ENCODE measurements at regions of chr1 and their contacts with region 1.

Region 1: DNA sequence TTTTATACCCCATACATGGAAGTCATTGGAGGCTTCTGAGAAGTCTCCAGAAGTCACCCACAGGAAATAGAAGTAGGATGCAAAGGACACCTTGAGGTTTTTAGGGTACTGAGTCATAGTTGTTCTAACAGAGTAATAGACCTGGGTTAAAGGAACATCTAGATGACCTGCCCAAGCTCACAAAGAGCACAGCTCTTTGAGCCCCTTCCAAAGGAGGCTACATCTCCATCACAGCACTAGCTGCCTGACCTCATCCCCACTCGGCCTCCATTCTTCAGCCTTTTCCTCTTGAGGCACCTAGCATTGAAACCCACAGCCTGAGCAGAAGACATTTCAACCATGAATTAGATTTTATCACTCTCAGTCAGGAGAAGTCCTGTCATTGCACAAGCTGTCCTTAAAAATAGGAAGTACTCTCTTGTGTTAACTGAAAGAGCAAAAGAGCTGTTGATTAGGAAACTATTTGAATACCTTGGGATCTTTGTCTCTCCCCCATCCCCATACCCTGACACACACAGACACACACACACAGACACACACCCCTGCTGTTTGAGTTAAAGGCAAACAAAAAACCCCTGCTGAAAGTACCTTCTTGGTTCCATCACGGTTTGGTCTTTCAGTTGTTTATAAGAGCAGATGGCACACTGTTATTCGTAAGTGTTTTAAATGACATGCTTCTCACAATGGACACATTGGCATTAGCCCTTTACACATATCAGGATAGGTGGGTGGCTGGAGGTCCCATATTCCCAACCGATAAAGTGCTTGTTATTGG is 22.2 kb downstream of the MKNK1 start:
- DNase-seq: no peak
- H3K4me3 ChIP-seq: no peak overlapping the region
- H3K27ac ChIP-seq: no peak overlapping the region
- H3K4me1 ChIP-seq: no peaks in the 10 kb centered on the region
- H3K27me3 ChIP-seq: no peaks in the 10 kb centered on the region
- CTCF ChIP-seq: no peak

Region 2: DNA sequence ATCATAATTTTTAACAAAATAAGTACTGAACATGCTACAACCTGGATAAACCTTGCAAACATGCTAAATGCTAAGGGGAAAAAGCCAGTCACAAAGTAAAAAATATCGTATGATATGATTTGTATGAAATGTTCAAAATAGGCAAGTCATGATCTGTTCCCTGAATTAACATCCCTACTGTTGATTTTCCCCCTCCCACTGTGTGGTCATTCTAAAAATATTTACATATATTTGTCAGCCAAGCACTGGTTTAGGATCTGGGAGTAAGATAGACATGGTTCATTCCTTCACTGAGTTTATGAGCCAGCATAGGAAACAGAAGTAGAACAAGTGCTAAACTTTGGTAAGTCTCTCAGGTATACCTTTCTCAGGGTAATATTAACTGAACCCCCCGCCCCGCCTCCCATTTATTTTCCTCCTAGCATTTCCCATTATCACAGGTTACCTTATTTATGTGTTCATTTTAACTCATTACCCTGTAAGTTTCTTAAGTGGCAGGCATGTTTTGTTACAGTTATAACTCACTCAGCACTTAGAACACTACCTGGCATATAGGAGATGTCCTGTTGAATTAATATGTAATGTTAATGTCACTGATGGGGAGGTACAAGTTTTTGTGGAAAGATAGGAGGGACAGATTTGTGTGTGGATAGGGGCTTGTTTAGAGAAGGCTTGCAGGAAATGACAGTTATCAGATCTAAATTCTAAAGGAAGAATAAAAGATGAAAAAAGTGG is 266.0 kb before region 1 on chr1:
- CTCF ChIA-PET with region 1: no interaction called
- POLR2A ChIA-PET with region 1: no interaction called
- intact Hi-C with region 1: no loop called
- DNase-seq: no peak
- H3K4me3 ChIP-seq: no peak overlapping the region
- H3K27ac ChIP-seq: no peak overlapping the region
- H3K4me1 ChIP-seq: no peaks in the 10 kb centered on the region
- H3K27me3 ChIP-seq: no peaks in the 10 kb centered on the region
- CTCF ChIP-seq: no peak

Region 3: DNA sequence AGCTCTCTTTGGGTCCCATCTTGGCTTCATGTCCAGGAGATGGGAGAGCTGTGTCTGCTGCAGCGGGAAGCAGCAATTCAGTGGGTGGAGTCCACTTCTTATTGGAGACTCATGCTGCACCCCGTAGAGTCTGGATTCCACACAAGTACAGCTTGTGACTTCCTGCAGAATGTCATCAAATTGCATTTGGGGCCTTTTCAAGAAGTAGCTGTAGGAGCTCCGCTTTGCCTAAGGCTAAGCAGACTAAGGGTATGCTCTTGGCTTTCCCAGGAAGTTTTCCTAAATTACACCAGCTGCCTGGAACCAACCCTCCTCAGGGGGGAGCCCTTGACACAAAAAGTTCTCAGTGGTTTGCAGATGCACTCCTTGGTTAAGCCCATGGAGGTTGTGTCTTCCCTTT is 40.5 kb after region 1 on chr1:
- CTCF ChIA-PET with region 1: no interaction called
- POLR2A ChIA-PET with region 1: interaction called, 11 read pairs
- intact Hi-C with region 1: no loop called
- DNase-seq: peak; percentile 76
- H3K4me3 ChIP-seq: no peak overlapping the region
- H3K27ac ChIP-seq: no peak overlapping the region
- H3K4me1 ChIP-seq: peaks cover 4% of the 10 kb centered on the region
- H3K27me3 ChIP-seq: no peaks in the 10 kb centered on the region
- CTCF ChIP-seq: peak; percentile 68

Region 4: DNA sequence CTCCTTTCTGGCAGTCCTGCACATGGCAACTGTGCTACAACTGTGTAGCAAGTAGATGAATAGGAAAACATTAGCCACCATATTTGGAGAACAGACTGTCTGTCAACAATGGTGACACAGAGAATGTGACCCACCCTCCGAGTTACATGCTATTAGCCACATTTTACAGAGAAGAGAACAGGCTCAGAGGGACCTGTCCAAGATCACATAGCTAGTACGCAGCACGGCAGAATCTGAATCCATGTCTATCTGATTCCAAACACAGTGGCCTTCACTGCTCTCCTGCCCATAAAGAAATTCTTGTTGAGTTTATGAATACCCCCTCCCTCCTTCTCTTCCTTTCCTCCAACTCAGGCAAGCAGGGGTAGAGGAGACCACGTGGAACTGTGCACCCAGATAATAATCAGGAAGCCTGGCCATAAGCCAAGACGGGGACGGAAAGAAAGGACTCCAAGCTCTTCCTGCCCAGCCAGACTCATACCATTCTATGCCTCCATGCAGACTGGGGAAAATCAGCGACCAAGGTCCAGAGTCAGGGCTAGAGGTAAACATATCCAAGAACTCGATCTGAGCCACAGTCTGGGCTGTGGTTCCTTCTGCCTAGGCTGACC is 1336.5 kb after region 1 on chr1:
- CTCF ChIA-PET with region 1: no interaction called
- POLR2A ChIA-PET with region 1: interaction called, 10 read pairs
- intact Hi-C with region 1: no loop called
- DNase-seq: peak; percentile 47
- H3K4me3 ChIP-seq: no peak overlapping the region
- H3K27ac ChIP-seq: no peak overlapping the region
- H3K4me1 ChIP-seq: peaks cover 6% of the 10 kb centered on the region
- H3K27me3 ChIP-seq: no peaks in the 10 kb centered on the region
- CTCF ChIP-seq: no peak

Measured in A673 (cell line).